ENCODE measurements at regions of chr1 and their contacts with region 1.

Region 1: GRCh38 chr1:27357281-27358037 is 9.3 kb downstream of the MAP3K6 start:
- DNase-seq: peak; percentile 89
- H3K4me3 Mint-ChIP-seq: peak overlapping the region; percentile 68
- H3K27ac Mint-ChIP-seq: peak overlapping the region; percentile 81
- H3K4me1 Mint-ChIP-seq: peaks cover 43% of the 10 kb centered on the region
- H3K27me3 Mint-ChIP-seq: no peaks in the 10 kb centered on the region

Region 2: GRCh38 chr1:27058966-27059669 is 298.3 kb before region 1 on chr1:
- CTCF ChIA-PET with region 1: no interaction called
- POLR2A ChIA-PET with region 1: no interaction called
- intact Hi-C with region 1: no loop called
- DNase-seq: no peak
- H3K4me3 Mint-ChIP-seq: no peak overlapping the region
- H3K27ac Mint-ChIP-seq: no peak overlapping the region
- H3K4me1 Mint-ChIP-seq: no peaks in the 10 kb centered on the region
- H3K27me3 Mint-ChIP-seq: no peaks in the 10 kb centered on the region

Region 3: DNA sequence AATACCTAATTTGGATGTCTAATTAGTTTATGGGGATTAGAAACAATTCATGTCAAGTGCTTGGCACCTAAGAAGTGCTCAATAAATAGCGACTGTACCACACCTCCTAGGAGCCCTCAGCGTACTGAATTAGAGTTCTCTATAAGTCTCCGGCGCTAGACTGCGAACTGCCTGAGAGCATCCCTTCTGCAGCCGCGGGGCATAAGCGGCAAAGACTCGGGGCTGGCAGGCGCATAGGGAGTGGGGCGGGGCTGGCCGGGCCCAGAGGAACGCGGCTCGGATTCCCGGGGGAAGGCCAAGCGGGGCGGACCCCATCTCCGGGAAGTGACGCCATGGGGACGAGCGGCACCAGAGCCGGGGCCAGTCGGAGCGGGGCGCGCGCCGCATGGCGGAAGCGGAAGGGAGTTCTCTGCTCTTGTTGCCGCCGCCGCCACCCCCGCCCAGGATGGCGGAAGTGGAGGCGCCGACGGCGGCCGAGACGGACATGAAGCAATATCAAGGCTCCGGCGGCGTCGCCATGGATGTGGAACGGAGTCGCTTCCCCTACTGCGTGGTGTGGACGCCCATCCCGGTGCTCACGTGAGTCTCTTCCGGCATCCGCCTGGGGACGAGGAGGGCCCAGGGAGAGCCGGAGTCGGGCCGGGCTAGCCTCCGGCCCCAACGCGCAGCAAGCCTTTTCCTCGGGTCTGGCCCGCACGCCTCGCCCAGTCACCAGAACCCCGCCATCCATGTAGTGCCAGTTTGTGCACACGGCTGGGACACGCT is 35.5 kb before region 1 on chr1 and contains the start of gene TMEM222:
- CTCF ChIA-PET with region 1: interaction called, 16 read pairs
- POLR2A ChIA-PET with region 1: interaction called, 3 read pairs
- intact Hi-C with region 1: no loop called
- DNase-seq: peak; percentile 98
- H3K4me3 Mint-ChIP-seq: peak within 1 kb of the TSS; percentile 96
- H3K27ac Mint-ChIP-seq: peak within 1 kb of the TSS; percentile 82
- H3K4me1 Mint-ChIP-seq: peaks cover 41% of the 10 kb centered on the region
- H3K27me3 Mint-ChIP-seq: no peaks in the 10 kb centered on the region
- total RNA-seq, gene TMEM222: 22.8 to 24.6 TPM

Region 4: GRCh38 chr1:27341525-27342252 is 15.8 kb before region 1 on chr1 and contains the start of gene SYTL1:
- CTCF ChIA-PET with region 1: interaction called, 80 read pairs
- POLR2A ChIA-PET with region 1: no interaction called
- intact Hi-C with region 1: loop called (anchors 2 kb)
- DNase-seq: peak; percentile 80
- H3K4me3 Mint-ChIP-seq: peak within 1 kb of the TSS; percentile 84
- H3K27ac Mint-ChIP-seq: peak within 1 kb of the TSS; percentile 92
- H3K4me1 Mint-ChIP-seq: peaks cover 51% of the 10 kb centered on the region
- H3K27me3 Mint-ChIP-seq: no peaks in the 10 kb centered on the region
- total RNA-seq, gene SYTL1: 27.3 to 30.4 TPM

Region 5: DNA sequence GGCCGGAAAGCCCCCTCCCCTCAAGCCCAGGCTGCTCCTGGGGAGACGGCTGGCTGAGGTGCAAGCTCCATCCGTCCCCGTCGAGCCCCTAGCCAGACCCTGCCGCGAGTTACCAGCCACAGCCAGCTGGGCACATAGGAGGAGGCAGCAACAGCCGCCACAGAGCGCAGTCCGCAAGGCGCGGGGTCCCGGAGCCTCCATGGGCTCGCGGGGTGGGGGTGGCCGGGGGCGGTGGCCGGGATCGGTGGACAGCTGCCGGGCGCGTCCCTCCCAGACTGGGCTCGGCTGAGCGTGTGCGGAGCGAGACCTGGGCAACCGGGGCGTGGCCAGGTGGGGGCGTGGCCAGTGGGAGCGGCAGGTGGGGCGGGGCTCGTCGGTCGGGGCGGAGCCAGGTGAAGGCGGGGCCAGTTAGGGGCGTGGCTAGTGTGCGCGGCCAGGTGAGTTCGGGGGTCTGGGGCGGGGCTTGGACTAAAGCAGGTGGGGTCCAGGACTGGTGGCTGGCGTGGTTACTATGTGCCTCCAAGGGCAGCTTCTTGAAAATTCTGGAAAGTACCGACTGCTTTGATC is 25.7 kb after region 1 on chr1 and contains the start of gene CD164L2:
- CTCF ChIA-PET with region 1: interaction called, 32 read pairs
- POLR2A ChIA-PET with region 1: no interaction called
- intact Hi-C with region 1: no loop called
- DNase-seq: peak; percentile 62
- H3K4me3 Mint-ChIP-seq: no peak within 1 kb of the TSS
- H3K27ac Mint-ChIP-seq: no peak within 1 kb of the TSS
- H3K4me1 Mint-ChIP-seq: no peaks in the 10 kb centered on the region
- H3K27me3 Mint-ChIP-seq: no peaks in the 10 kb centered on the region
- total RNA-seq, gene CD164L2: not detected

Region 6: GRCh38 chr1:27392096-27392777 is 34.8 kb after region 1 on chr1 and contains the start of gene GPR3:
- CTCF ChIA-PET with region 1: interaction called, 40 read pairs
- POLR2A ChIA-PET with region 1: no interaction called
- intact Hi-C with region 1: loop called (anchors 1 kb)
- DNase-seq: peak; percentile 96
- H3K4me3 Mint-ChIP-seq: peak within 1 kb of the TSS; percentile 78
- H3K27ac Mint-ChIP-seq: peak within 1 kb of the TSS; percentile 63
- H3K4me1 Mint-ChIP-seq: peaks cover 13% of the 10 kb centered on the region
- H3K27me3 Mint-ChIP-seq: no peaks in the 10 kb centered on the region
- total RNA-seq, gene GPR3: 1.3 to 1.5 TPM

Measured in activated CD4-positive, alpha-beta memory T cell treated with anti-CD3 and anti-CD28 coated beads for 36 hours (primary cell).